Activated CD4-positive, alpha-beta T cell treated with anti-CD3 and anti-CD28 coated beads for 36 hours (primary cell): ENCODE measurements at regions of chr10 and their contacts with region 1.

Region 1: GRCh38 chr10:80599424-80599847 is 61.7 kb downstream of the SH2D4B start:
- DNase-seq: peak; percentile 64
- ATAC-seq: peak; percentile 80
- H3K4me3 Mint-ChIP-seq: no peak overlapping the region
- H3K27ac Mint-ChIP-seq: no peak overlapping the region
- H3K4me1 Mint-ChIP-seq: no peaks in the 10 kb centered on the region
- H3K27me3 Mint-ChIP-seq: no peaks in the 10 kb centered on the region

Region 2: GRCh38 chr10:80552151-80552646 is 47.2 kb before region 1 on chr10:
- CTCF ChIA-PET with region 1: interaction called, 15 read pairs
- POLR2A ChIA-PET with region 1: no interaction called
- intact Hi-C with region 1: no loop called
- DNase-seq: no peak
- ATAC-seq: no peak
- H3K4me3 Mint-ChIP-seq: no peak overlapping the region
- H3K27ac Mint-ChIP-seq: no peak overlapping the region
- H3K4me1 Mint-ChIP-seq: no peaks in the 10 kb centered on the region
- H3K27me3 Mint-ChIP-seq: peaks cover 5% of the 10 kb centered on the region

Region 3: GRCh38 chr10:80580638-80581468 is 18.6 kb before region 1 on chr10:
- CTCF ChIA-PET with region 1: interaction called, 11 read pairs
- POLR2A ChIA-PET with region 1: no interaction called
- intact Hi-C with region 1: no loop called
- DNase-seq: no peak
- ATAC-seq: no peak
- H3K4me3 Mint-ChIP-seq: no peak overlapping the region
- H3K27ac Mint-ChIP-seq: no peak overlapping the region
- H3K4me1 Mint-ChIP-seq: no peaks in the 10 kb centered on the region
- H3K27me3 Mint-ChIP-seq: peaks cover 8% of the 10 kb centered on the region

Region 4: DNA sequence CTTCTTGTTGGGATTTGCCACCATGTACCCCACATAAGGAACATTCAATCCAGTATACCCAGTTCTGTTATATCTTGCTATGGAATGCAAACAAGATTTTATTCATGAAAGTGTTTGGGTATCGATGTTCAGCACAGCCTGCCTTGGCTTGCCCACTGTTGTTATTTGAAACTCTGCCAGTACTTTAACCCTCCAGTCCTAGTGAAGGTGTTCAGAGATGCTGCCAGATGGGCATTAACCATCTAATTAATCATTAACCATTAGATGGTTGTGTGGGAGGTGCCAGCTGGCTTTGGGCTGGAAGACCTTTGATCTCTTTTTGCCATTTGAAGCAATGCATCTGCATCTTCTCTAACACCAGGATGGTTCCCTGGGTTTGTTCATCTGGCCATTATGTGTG is 301.2 kb after region 1 on chr10:
- CTCF ChIA-PET with region 1: no interaction called
- POLR2A ChIA-PET with region 1: no interaction called
- intact Hi-C with region 1: no loop called
- DNase-seq: no peak
- ATAC-seq: no peak
- H3K4me3 Mint-ChIP-seq: no peak overlapping the region
- H3K27ac Mint-ChIP-seq: no peak overlapping the region
- H3K4me1 Mint-ChIP-seq: no peaks in the 10 kb centered on the region
- H3K27me3 Mint-ChIP-seq: no peaks in the 10 kb centered on the region